Heart left ventricle (tissue), 16 donors: ENCODE measurements at regions of chr2 and their contacts with region 1.

Region 1: DNA sequence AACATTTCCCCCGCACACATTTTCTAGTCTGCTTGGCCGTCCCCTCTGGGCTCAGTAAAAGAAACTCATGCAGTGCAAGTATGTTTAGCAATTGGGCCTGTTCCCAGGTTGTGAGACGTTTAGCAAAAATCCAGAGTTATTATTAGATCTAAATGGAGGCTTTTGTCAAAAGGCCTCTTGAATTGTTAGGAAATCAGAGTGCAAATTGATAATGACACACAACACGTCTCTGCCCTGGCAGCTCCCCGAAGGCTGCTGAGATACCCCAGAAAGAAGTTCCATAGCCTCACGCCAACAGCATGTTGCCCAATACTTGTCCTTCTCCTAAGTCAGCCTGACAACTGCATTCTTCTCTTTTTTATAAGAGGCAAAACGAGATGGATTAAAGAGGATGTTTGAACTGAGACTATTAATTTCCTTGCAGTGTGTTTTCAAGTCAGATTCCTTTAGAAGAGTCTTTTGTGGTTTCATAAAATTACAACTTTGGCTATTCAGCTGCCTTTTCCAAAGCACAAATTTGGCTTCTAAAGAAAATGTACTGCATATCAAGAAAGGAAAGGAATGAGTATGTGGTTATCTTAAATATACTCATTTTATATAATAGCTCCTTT is 202.2 kb downstream of the TRIB2 start:
- DNase-seq: peak; percentile 57 to 88 (median 71)
- ATAC-seq: peak; percentile 85 to 97 (median 94)
- H3K4me3 ChIP-seq: peak overlapping the region in 1 of 12 donors; percentile 2
- H3K27ac ChIP-seq: peak overlapping the region; percentile 39 to 90 (median 77)
- H3K4me1 ChIP-seq: peaks cover 0 to 28% (median 16%) of the 10 kb centered on the region in 12 donors
- H3K27me3 ChIP-seq: no peaks in the 10 kb centered on the region
- CTCF ChIP-seq: no peak
- POLR2A ChIP-seq: no peak

Region 2: DNA sequence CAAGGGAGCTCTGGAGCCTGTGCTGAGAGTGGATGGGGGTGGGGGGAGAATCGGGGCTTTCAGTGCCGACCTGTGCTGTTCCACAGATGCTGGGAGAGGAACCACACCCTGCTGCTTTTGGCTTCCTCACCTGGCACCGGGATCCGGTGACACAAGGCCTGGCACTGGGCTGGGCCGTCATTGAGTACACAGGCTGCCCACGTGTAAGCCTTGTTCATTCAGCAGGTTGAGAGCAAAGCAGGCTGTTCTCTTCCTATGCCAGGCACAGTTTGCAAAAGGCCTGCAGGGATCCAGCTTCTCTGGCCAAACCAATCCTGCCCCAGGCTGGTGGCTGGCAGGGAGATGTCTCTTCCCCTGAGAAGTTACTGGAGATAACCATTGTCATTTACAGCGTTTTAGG is 185.1 kb before region 1 on chr2:
- intact Hi-C with region 1: loop called in 1 of 10 experiments (anchors 5 kb)
- DNase-seq: peak in 4 of 5 donors; percentile 45 to 79 (median 72)
- ATAC-seq: peak; percentile 68 to 79 (median 72)
- H3K4me3 ChIP-seq: no peak overlapping the region
- H3K27ac ChIP-seq: peak overlapping the region; percentile 51 to 83 (median 74)
- H3K4me1 ChIP-seq: peaks cover 31 to 96% (median 82%) of the 10 kb centered on the region in 12 donors
- H3K27me3 ChIP-seq: no peaks in the 10 kb centered on the region
- CTCF ChIP-seq: no peak
- POLR2A ChIP-seq: peak in 1 of 2 donors; percentile 27

Region 3: DNA sequence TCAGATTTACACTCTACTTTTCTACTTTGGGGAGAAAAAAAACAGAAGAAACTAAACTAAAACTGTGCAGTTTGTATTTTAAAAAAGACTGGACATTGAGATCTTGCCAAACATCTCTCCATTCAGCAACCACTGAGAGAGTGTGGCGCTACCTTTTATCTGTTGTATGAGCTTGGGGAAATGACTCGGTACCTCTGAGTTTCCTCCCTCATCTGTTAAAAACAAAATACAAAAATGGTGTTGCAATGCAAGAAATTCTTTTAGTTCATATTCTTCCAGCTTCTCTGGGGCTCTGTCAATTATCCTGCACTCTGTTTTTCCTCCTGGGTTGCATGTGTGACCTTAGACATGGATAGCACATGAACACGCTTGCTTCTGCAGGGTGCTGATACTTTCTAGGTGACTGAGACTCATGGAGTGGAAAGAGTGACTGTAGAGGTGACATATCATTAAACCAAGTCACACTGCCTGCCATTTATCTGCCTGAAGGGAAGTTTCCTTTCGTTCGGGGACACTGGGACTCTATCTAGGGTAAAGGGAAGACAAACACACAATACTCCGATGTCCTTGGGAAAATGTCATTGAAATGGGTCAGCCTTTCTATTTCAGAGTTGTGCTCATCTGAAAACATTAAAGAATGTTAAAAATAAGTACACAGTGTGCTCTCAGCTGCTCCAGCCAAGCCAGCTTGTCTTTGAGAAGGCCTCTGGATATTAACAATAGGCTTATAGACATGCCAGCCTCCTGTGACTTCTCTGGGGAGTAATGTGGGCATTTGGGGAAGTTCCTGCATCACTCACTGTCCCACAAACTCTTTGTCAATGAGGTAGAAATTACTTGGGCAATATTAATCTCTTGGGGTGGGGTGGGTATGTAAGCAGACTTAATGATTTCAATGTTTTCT is 110.8 kb before region 1 on chr2:
- intact Hi-C with region 1: loop called in 1 of 10 experiments (anchors 5 kb)
- DNase-seq: peak in 2 of 5 donors; percentile 41 to 48
- ATAC-seq: peak; percentile 74 to 90 (median 84)
- H3K4me3 ChIP-seq: no peak overlapping the region
- H3K27ac ChIP-seq: peak overlapping the region; percentile 42 to 87 (median 72)
- H3K4me1 ChIP-seq: peaks cover 9 to 58% (median 44%) of the 10 kb centered on the region in 12 donors
- H3K27me3 ChIP-seq: no peaks in the 10 kb centered on the region
- CTCF ChIP-seq: no peak
- POLR2A ChIP-seq: peak in 1 of 2 donors; percentile 17

Region 4: DNA sequence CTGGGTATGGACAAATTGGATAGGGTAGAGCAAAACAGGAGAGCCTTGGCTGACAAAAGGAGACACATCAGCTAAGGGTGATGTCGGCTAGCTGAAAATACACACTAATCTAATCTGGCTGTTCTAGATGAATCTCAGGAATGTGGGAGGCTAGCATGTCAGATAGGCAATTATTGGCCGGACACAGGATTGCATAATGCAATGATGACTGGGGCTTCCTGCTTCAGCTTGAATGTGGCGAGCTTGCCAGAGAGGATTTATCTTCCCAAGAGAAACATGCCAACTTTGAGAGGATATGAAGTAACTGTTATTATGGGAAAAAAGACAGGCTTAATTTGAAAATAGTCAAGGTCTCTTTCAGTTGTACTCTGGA is 99.9 kb before region 1 on chr2:
- intact Hi-C with region 1: loop called in 4 of 10 experiments (anchors 5 to 10 kb)
- DNase-seq: peak in 4 of 5 donors; percentile 87 to 90 (median 88)
- ATAC-seq: peak; percentile 97 to 98 (median 98)
- H3K4me3 ChIP-seq: peak overlapping the region in 1 of 12 donors; percentile 3
- H3K27ac ChIP-seq: peak overlapping the region; percentile 70 to 95 (median 89)
- H3K4me1 ChIP-seq: peaks cover 7 to 61% (median 45%) of the 10 kb centered on the region in 12 donors
- H3K27me3 ChIP-seq: no peaks in the 10 kb centered on the region
- CTCF ChIP-seq: no peak
- POLR2A ChIP-seq: peak in 1 of 2 donors; percentile 45

Region 5: GRCh38 chr2:12847694-12848575 is 71.0 kb before region 1 on chr2:
- intact Hi-C with region 1: loop called in 2 of 10 experiments (anchors 5 kb)
- DNase-seq: peak in 1 of 5 donors; percentile 40
- ATAC-seq: peak; percentile 64 to 79 (median 70)
- H3K4me3 ChIP-seq: no peak overlapping the region
- H3K27ac ChIP-seq: peak overlapping the region in 6 of 12 donors; percentile 5 to 54 (median 28)
- H3K4me1 ChIP-seq: peaks cover 0 to 17% (median 0%) of the 10 kb centered on the region in 12 donors
- H3K27me3 ChIP-seq: no peaks in the 10 kb centered on the region
- CTCF ChIP-seq: no peak
- POLR2A ChIP-seq: no peak

Region 6: DNA sequence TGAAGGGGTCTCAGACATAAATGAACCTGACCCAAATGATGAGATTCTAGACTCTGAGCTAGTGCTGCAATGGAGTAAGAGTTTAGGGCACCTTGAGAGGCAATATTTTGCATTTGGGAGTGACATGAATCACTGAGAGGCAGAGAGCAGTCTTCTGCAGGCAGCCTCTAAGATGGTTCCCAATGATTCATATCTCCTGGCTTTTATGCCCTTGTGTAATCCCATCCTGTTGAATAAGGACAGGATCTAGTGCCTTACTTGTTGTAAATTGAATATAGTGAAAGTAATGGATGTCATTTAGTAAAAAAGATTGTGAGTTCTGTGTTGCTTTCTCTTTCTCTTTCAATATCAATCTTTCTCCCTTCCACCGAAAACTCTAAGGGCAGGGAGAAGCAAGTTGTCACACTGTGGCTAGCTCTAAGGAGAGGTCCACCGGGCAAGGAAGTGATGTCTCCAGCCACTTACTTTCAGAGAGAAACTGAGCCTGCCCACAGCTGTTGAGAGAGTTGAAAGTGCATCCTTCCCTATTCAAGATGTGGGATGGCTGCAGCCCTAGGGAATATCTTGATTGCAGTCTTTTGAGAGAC is 57.5 kb before region 1 on chr2:
- intact Hi-C with region 1: no loop called
- DNase-seq: no peak
- ATAC-seq: peak in 3 of 4 donors; percentile 34 to 80 (median 54)
- H3K4me3 ChIP-seq: peak overlapping the region in 1 of 12 donors; percentile 4
- H3K27ac ChIP-seq: peak overlapping the region in 8 of 12 donors; percentile 14 to 81 (median 50)
- H3K4me1 ChIP-seq: peaks cover 0 to 39% (median 7%) of the 10 kb centered on the region in 12 donors
- H3K27me3 ChIP-seq: no peaks in the 10 kb centered on the region
- CTCF ChIP-seq: no peak
- POLR2A ChIP-seq: no peak